ENCODE measurements at regions of chr16 and their contacts with region 1.

Region 1: DNA sequence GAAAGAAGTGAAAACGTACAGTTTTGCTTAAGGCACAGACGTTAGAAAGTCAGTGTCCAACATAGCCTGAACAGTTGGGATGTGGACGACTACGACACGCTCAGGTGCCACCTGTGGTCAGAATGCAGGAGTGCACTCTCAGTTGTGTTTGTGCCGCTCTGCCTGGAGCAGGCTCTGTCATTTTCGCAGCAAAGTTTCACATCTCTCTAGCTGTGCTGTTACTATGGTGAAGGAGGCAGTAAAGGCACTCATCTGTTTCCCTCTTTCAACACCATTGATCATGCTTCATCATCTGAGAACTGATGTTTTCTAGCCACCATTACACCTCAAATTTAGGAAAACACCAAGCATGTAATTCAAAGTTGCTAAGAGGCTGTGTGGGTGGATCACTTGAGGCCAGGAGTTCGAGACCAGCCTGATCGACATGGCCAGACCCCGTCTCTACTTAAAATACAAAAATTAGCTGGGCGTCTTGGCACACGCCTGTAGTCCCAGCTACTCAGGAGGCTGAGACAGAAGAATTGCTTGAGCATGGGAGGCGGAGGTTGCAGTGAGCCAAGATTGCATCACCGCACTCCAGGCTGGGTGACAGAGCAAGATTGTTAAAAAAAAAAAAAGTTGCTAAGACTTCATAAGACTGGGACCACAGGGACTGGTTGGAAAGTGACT is 44.9 kb upstream of the DNAJA2 start:
- DNase-seq: peak in 4 of 5 donors; percentile 24 to 36 (median 33)
- H3K4me3 ChIP-seq: no peak overlapping the region
- H3K4me3 Mint-ChIP-seq: peak overlapping the region in 1 of 8 donors; percentile 20
- H3K27ac ChIP-seq: no peak overlapping the region
- H3K27ac Mint-ChIP-seq: peak overlapping the region in 2 of 7 donors; percentile 10 to 17
- H3K4me1 ChIP-seq: peaks cover 11% of the 10 kb centered on the region
- H3K4me1 Mint-ChIP-seq: peaks cover 12 to 23% (median 19%) of the 10 kb centered on the region in 4 donors
- H3K27me3 ChIP-seq: no peaks in the 10 kb centered on the region
- H3K27me3 Mint-ChIP-seq: no peaks in the 10 kb centered on the region

Region 2: GRCh38 chr16:46947900-46948547 is 70.3 kb before region 1 on chr16:
- CTCF ChIA-PET with region 1: interaction called, 3 read pairs
- POLR2A ChIA-PET with region 1: no interaction called
- intact Hi-C with region 1: loop called (anchors 1 kb)
- DNase-seq: peak in 4 of 5 donors; percentile 47 to 54 (median 50)
- H3K4me3 ChIP-seq: no peak overlapping the region
- H3K4me3 Mint-ChIP-seq: peak overlapping the region in 2 of 8 donors; percentile 4 to 46
- H3K27ac ChIP-seq: no peak overlapping the region
- H3K27ac Mint-ChIP-seq: peak overlapping the region in 6 of 7 donors; percentile 29 to 68 (median 52)
- H3K4me1 ChIP-seq: peaks cover 15% of the 10 kb centered on the region
- H3K4me1 Mint-ChIP-seq: peaks cover 8 to 27% (median 15%) of the 10 kb centered on the region in 4 donors
- H3K27me3 ChIP-seq: no peaks in the 10 kb centered on the region
- H3K27me3 Mint-ChIP-seq: no peaks in the 10 kb centered on the region

Region 3: DNA sequence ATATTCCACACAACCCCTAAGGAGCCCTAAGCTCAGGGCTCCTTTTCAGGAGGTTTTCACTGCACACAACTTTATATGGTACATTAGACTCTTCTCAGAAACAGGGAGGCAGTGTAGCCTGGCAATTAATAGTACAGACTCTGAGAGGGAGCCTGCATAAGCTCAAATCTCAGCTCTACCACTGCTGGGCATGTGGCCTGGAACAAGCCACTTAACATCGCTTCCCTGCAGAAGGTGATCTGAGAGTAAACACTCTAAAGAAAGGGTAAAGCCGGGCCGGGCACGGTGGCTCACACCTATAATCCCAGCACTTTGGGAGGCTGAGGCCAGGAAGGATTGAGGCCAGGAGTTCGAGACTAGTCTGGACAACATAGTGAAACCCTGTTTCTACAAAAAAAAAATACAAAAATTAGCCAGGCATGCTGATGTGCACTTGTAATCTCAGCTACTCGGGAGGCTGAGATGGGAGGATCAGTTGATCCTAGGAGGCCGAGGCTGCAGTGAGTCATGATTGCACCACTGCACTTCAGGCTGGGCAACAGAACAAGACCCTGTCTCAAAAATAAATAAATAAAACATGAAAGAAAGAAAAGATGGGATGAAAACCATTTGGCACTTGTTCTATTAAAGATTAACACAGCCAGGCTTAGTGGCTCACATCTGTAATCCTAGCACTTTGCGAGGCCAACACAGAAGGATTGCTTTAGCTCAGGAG is 25.8 kb after region 1 on chr16:
- CTCF ChIA-PET with region 1: no interaction called
- POLR2A ChIA-PET with region 1: no interaction called
- intact Hi-C with region 1: no loop called
- DNase-seq: no peak
- H3K4me3 ChIP-seq: no peak overlapping the region
- H3K4me3 Mint-ChIP-seq: no peak overlapping the region
- H3K27ac ChIP-seq: no peak overlapping the region
- H3K27ac Mint-ChIP-seq: peak overlapping the region in 1 of 7 donors; percentile 4
- H3K4me1 ChIP-seq: peaks cover 13% of the 10 kb centered on the region
- H3K4me1 Mint-ChIP-seq: peaks cover 13 to 23% (median 16%) of the 10 kb centered on the region in 4 donors
- H3K27me3 ChIP-seq: no peaks in the 10 kb centered on the region
- H3K27me3 Mint-ChIP-seq: no peaks in the 10 kb centered on the region